ENCODE measurements at regions of chr1 and their contacts with region 1.

Region 1: DNA sequence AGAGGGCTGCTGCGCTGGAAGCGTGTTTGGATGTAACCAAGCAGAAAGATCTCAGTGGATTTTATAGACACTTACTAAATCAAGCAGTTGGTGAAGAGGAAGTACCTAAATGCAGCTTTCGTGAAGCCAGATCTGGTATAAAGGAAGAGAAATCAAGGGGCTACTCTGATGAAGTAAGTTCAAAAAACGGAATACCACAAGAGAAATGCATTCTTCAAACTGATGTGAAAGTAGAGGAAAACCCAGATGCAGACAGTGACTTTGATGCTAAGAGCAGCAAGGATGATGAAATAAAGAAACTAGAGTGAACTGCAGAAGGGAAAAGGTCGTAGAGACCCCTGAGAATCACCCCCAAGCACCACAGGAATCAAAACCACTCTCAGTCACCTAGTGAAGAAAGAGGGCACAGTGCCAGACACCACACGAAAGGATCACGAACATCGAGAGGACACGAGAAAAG is 40.8 kb upstream of the NEXN start:
- DNase-seq: peak; percentile 79
- H3K4me3 ChIP-seq: peak overlapping the region; percentile 55
- H3K27ac ChIP-seq: peak overlapping the region; percentile 69
- H3K4me1 ChIP-seq: peaks cover 31% of the 10 kb centered on the region
- CTCF ChIP-seq: no peak

Region 2: GRCh38 chr1:77759071-77760028 is 88.3 kb before region 1 on chr1 and contains the start of gene USP33:
- CTCF ChIA-PET with region 1: no interaction called
- POLR2A ChIA-PET with region 1: no interaction called
- intact Hi-C with region 1: loop called (anchors 5 kb)
- DNase-seq: peak; percentile 93
- H3K4me3 ChIP-seq: peak within 1 kb of the TSS; percentile 83
- H3K27ac ChIP-seq: peak within 1 kb of the TSS; percentile 61
- H3K4me1 ChIP-seq: peaks cover 36% of the 10 kb centered on the region
- CTCF ChIP-seq: 0 out of 2 replicates have a peak, but pooled peaks have one; percentile 15
- total RNA-seq, gene USP33: 44.1 and 47.8 TPM in 2 replicates

Region 3: GRCh38 chr1:77832901-77833300 is 14.8 kb before region 1 on chr1:
- CTCF ChIA-PET with region 1: no interaction called
- POLR2A ChIA-PET with region 1: interaction called, 12 read pairs
- intact Hi-C with region 1: no loop called
- DNase-seq: no peak
- H3K4me3 ChIP-seq: no peak overlapping the region
- H3K27ac ChIP-seq: no peak overlapping the region
- H3K4me1 ChIP-seq: peaks cover 15% of the 10 kb centered on the region
- CTCF ChIP-seq: no peak

Measured in OCI-LY7 (cell line).